Transverse colon (tissue), 4 donors: ENCODE measurements at regions of chr20 and their contacts with region 1.

Region 1: GRCh38 chr20:51216850-51217249 is 193.9 kb upstream of the KCNG1 start:
- DNase-seq: no peak
- H3K4me3 ChIP-seq: no peak overlapping the region
- H3K27ac ChIP-seq: no peak overlapping the region
- H3K4me1 ChIP-seq: peaks cover 0 to 4% (median 0%) of the 10 kb centered on the region in 4 donors
- H3K27me3 ChIP-seq: peaks cover 28% of the 10 kb centered on the region
- CTCF ChIP-seq: no peak
- EP300 ChIP-seq: no peak
- POLR2A ChIP-seq: no peak

Region 2: DNA sequence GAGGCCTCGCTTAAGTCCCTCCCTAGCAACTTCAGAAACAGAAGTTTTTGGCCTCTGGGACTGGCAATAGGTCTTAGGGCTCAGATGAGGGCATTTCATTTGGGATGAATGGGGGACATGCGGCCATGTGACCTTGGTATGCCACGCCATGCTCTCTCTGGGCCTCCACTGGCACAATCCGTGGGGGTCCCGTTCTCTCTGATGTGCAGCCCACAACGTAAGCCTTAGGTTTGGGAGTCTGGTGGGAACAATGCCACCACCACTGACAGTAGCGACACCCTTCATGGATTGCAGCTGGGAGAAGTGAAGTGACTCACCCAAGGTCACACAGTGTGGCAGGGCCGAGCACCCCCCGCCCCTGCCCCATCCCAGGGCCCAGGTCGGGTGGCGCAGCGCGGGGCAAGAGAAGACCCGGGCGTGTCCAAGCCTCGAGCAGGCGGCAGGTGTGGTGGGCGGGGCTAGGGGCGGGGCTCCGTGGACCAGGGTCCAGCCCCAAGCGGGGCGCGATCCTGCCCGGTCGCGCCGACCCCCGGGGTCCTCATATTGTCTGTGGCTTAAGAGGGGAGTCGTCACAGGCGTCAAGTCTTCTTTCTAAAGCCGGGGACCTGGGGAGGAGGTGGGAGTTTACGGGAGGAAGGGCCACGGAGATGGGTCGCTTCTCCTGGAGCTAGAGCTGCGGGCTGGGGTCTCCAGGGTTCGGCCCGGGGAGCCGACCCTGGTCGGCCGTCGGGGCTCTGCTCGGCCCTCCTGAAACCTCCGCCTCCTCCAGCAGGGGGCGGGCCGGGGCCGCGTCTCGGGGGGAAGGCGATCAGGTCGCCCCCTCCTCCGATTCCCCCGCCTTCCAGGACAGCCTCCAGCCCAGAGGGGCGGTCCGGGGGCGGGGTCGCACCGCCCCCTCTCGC is 1026.9 kb before region 1 on chr20:
- in situ Hi-C with region 1: no loop called
- intact Hi-C with region 1: no loop called
- DNase-seq: peak; percentile 88
- H3K4me3 ChIP-seq: peak overlapping the region; percentile 82 to 93 (median 90)
- H3K27ac ChIP-seq: peak overlapping the region; percentile 98 to 100 (median 99)
- H3K4me1 ChIP-seq: peaks cover 4 to 41% (median 31%) of the 10 kb centered on the region in 4 donors
- H3K27me3 ChIP-seq: no peaks in the 10 kb centered on the region
- CTCF ChIP-seq: peak; percentile 70 to 81 (median 75)
- EP300 ChIP-seq: no peak
- POLR2A ChIP-seq: no peak

Region 3: DNA sequence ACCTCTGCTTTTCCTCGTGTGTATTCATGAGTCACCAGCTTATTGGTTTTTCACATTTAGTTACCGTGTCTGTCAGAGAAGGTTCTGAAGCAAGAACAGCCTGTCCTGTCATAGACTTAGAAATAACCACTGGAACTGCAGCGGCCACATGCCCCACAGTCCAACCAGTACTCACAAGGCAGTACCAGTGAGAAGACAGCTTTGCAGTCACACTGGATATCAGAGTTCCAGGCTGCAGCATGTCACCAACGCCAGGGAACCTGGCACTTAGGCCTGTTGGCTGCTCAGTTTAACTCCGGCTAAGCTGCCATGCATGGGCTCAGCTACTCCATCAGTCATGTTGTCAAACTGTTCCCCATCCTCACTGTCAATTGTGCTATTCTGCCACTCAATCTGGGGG is 325.7 kb before region 1 on chr20:
- in situ Hi-C with region 1: no loop called
- intact Hi-C with region 1: no loop called
- DNase-seq: no peak
- H3K4me3 ChIP-seq: no peak overlapping the region
- H3K27ac ChIP-seq: no peak overlapping the region
- H3K4me1 ChIP-seq: peaks cover 0 to 10% (median 2%) of the 10 kb centered on the region in 4 donors
- H3K27me3 ChIP-seq: no peaks in the 10 kb centered on the region
- CTCF ChIP-seq: no peak
- EP300 ChIP-seq: no peak
- POLR2A ChIP-seq: no peak

Region 4: GRCh38 chr20:51586005-51586440 is 369.2 kb after region 1 on chr20:
- in situ Hi-C with region 1: no loop called
- intact Hi-C with region 1: loop called (anchors 5 kb)
- DNase-seq: no peak
- H3K4me3 ChIP-seq: no peak overlapping the region
- H3K27ac ChIP-seq: no peak overlapping the region
- H3K4me1 ChIP-seq: no peaks in the 10 kb centered on the region
- H3K27me3 ChIP-seq: no peaks in the 10 kb centered on the region
- CTCF ChIP-seq: no peak
- EP300 ChIP-seq: no peak
- POLR2A ChIP-seq: no peak